ENCODE measurements at regions of chr5 and their contacts with region 1.

Region 1: DNA sequence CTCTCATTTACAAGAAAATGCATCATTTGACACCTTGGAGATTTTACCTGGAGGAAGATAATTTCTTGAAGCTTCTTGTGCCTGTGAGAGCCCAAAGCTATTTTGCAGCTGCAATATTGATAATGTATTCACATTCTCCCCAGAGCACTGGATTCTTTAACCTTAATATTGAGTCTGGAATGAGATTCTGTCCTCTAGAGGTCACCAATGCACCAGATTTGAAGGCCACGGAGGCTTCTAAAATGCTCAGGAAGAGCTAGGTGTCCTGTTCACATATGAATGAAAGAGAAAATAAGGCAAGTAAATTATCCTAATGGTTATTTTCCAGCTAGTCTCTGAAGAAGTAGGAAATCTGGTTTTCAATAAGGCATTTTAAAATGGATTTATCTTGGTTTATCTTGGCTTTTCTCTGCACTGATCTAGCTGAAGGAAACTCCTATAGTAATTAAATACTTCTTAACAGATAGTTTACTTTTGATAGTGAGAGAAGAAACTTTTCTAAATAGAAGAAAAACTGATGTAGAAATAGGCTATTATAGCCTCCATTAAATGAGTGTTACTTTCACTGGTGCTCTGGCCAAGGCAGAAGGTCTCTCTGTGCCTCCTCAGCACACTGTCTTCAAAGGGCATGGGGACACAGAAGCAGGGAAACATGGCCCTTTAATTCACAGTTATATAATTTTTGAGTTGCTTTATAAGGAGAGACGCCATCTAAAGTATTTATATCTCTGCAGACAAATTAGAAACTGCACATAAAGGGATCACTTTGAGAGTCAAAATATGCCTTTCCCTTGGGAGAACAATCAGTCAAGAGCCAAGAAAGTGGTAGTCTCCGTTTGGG is 297.0 kb upstream of the ACTBL2 start:
- DNase-seq: peak in 3 of 10 donors; percentile 21 to 63 (median 47)
- H3K4me3 ChIP-seq: peak overlapping the region in 1 of 59 donors; percentile 3
- H3K27ac ChIP-seq: peak overlapping the region in 42 of 59 donors; percentile 1 to 84 (median 53)
- H3K27me3 ChIP-seq: no peaks in the 10 kb centered on the region
- CTCF ChIP-seq: peak in 55 of 56 donors; percentile 50 to 89 (median 72)

Region 2: DNA sequence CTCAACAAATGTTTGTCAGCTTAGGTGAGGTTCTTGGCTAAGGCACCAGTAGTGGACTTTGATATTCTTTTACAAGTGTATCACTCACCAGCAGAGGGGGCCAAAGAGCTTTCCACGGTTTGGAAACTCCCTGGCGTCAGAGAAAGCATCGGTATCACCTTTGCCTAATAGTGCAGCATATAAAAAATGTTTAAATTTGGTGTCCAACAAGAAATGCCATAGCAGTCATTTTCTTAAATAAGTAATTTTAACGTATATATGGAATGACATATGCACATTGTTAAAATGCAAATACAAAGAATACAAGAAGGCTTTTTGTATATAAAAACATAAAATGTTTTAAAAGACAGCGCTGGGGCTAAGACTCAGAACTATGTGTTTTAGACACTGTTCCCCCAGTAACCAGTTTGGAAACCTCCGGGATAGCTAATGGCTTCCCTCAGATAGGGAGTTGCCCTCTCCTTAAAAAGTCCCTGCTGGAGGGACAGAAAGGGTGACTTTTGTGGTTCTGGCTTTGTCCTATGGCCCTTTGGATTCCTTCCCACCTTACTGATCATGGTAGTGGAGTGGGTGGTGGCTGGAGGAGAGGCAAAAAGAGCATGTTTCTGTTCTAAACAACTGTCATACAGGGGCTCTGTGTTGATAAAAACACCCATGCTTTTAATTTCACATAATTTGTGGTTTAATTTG is 481.2 kb before region 1 on chr5:
- intact Hi-C with region 1: loop called (anchors 5 kb)
- DNase-seq: peak; percentile 44 to 87 (median 80)
- H3K4me3 ChIP-seq: peak overlapping the region in 31 of 59 donors; percentile 2 to 50 (median 36)
- H3K27ac ChIP-seq: peak overlapping the region in 4 of 59 donors; percentile 16 to 55 (median 32)
- H3K27me3 ChIP-seq: no peaks in the 10 kb centered on the region
- CTCF ChIP-seq: peak; percentile 63 to 92 (median 84)

Region 3: GRCh38 chr5:57698769-57699168 is 80.8 kb before region 1 on chr5:
- intact Hi-C with region 1: loop called in 1 of 2 experiments (anchors 5 kb)
- DNase-seq: no peak
- H3K4me3 ChIP-seq: no peak overlapping the region
- H3K27ac ChIP-seq: peak overlapping the region in 29 of 59 donors; percentile 3 to 89 (median 49)
- H3K27me3 ChIP-seq: no peaks in the 10 kb centered on the region
- CTCF ChIP-seq: no peak